Activated CD4-positive, alpha-beta T cell treated with anti-CD3 and anti-CD28 coated beads for 36 hours (primary cell): ENCODE measurements at regions of chr1 and their contacts with region 1.

Region 1: GRCh38 chr1:153277817-153278216 is 18.3 kb downstream of the LORICRIN start:
- DNase-seq: peak; percentile 80
- ATAC-seq: peak; percentile 94
- H3K4me3 Mint-ChIP-seq: no peak overlapping the region
- H3K27ac Mint-ChIP-seq: no peak overlapping the region
- H3K4me1 Mint-ChIP-seq: no peaks in the 10 kb centered on the region
- H3K27me3 Mint-ChIP-seq: peaks cover 9% of the 10 kb centered on the region

Region 2: DNA sequence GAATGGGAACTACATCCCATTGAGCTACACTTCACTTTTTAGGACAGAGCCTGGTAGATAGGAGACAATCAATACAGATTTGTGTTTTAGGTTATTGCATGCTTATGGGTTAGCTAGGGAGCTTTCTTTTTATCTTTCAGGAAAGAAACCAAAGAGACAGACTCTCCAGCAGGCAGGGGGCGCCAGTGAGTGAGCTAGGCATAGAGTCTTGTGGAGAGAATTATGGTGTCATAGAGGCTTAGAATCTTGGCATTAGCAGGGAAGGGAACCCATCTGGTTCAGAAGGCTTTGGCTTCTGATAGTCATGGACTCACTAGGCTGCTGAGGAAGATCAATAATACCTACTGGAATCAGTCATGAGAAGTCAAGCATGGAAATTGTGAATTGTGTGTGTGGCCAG is 399.8 kb before region 1 on chr1 and contains the start of gene SMCP:
- CTCF ChIA-PET with region 1: no interaction called
- POLR2A ChIA-PET with region 1: no interaction called
- intact Hi-C with region 1: loop called in 1 of 2 experiments (anchors 2 kb)
- DNase-seq: peak; percentile 73
- ATAC-seq: no peak
- H3K4me3 Mint-ChIP-seq: no peak within 1 kb of the TSS
- H3K27ac Mint-ChIP-seq: no peak within 1 kb of the TSS
- H3K4me1 Mint-ChIP-seq: no peaks in the 10 kb centered on the region
- H3K27me3 Mint-ChIP-seq: peaks cover 12% of the 10 kb centered on the region
- total RNA-seq, gene SMCP: not detected

Region 3: DNA sequence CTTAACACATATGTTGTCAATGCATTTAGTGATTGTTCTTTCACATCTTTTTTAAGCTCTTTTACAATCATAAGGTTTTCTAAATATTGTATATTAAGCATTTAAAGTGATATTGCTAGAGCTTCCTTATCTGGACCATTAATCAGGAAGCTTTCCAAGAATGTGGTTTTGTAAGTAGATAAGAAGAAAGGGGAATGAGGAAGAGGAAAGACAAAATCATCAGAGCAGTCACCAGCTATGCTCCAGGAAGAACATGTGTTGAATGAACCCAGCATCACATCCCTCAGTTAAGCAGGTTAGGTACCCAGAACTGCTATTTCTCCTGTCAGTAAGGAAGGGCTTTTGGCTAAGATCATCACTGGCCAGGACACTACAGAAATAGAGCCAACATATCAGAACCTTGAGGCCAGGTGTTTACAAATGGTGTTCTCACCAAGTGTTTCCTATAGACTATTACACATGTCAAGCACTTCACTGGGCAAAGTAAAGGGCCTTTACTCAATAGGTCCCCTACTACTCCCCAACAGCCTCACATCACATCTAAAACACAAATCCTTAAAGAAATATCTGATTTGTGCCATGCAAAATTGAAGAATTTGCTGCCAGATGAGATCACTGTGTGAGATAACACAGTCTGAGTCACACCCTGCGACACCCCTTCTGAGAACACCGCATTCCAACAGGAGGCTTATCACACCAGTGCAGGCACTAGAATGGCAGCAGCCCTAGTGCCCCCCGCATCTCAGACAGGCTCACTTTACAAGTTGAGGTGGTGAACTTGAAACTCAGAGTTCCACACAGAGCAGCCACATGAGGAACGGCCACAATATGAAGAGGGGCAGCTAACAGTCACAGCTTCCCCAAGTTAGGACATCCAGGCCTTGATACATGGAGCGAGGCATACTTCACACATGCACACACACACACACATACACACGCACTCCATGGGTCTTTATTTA is 218.7 kb before region 1 on chr1:
- CTCF ChIA-PET with region 1: no interaction called
- POLR2A ChIA-PET with region 1: no interaction called
- intact Hi-C with region 1: no loop called
- DNase-seq: no peak
- ATAC-seq: no peak
- H3K4me3 Mint-ChIP-seq: no peak overlapping the region
- H3K27ac Mint-ChIP-seq: no peak overlapping the region
- H3K4me1 Mint-ChIP-seq: no peaks in the 10 kb centered on the region
- H3K27me3 Mint-ChIP-seq: peaks cover 18% of the 10 kb centered on the region

Region 4: GRCh38 chr1:153231363-153231762 is 46.5 kb before region 1 on chr1:
- CTCF ChIA-PET with region 1: interaction called, 3 read pairs
- POLR2A ChIA-PET with region 1: no interaction called
- intact Hi-C with region 1: loop called in 1 of 2 experiments (anchors 5 kb)
- DNase-seq: no peak
- ATAC-seq: no peak
- H3K4me3 Mint-ChIP-seq: no peak overlapping the region
- H3K27ac Mint-ChIP-seq: no peak overlapping the region
- H3K4me1 Mint-ChIP-seq: no peaks in the 10 kb centered on the region
- H3K27me3 Mint-ChIP-seq: peaks cover 15% of the 10 kb centered on the region